Panc1 (cell line): ENCODE measurements at regions of chr16 and their contacts with region 1.

Region 1: DNA sequence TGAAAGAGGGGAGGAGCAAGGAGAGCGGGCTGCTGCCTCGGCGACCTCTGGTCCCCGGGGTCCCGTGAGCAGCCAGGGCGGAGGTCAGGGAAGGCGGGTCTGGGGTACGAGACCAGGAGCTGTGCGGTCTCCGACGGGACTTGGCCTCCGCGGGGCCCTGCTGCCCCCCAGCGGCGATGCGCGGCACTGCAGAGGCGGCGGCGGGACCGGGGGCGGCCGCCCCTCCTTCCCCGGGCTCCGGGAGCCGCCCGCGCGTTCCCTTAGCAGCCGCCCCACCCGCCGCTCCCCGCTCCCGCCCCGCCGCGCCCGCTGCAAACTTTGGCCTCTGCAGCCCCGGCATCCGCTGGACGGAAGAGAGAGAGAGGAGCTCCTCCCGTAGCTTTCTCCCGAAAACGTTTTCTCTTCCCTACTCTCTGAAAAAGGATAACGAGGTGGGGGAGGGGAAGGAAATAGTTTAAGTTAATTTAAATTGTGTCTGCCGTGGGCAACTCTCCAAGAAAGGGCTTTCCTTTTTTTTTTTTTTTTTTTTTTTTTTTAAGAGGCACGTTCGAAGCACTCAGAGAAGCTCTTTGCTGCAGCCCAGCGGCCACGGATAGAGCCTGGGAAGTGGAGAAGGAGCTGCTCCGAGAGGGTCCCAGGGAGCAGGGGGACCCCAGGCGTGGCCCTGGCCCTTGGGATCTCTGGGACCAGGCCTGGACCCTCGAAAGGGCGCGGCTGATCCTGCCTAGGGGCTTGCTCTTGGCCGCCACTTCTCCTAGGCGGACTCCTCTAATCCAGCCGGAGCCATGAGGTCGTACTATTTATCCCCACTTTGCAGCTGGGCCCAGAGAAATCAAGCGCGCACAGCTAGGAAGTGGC is 43.2 kb downstream of the C16orf82 start:
- DNase-seq: no peak
- ATAC-seq: peak; percentile 84
- H3K4me3 ChIP-seq: peak overlapping the region; percentile 31 to 47
- H3K27ac ChIP-seq: no peak overlapping the region
- H3K4me1 ChIP-seq: peaks cover 6% of the 10 kb centered on the region; the same call in 1 of the 2 replicates
- H3K27me3 ChIP-seq: peaks cover 2% of the 10 kb centered on the region; the same call in 1 of the 2 replicates
- CTCF ChIP-seq: peak; percentile 97

Region 2: DNA sequence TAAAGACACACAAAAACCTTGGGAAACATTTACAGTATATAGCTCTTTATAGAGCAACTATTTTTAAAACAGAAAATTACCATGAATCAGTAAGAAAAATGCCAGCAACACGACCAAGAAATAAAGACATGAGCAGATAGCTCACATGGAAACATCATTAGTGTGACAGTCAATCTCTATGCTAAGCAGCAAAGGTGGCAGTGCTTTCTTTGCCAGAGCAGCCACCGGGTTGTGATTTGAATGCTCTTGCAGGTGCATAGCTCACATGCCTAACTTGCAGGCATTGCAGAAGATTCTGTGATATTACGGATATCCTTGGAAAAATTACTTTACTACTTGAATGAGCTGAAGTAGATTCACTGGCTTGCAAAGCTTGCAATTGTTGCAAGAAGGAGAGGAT is 696.1 kb before region 1 on chr16:
- CTCF ChIA-PET with region 1: interaction called, 16 read pairs
- POLR2A ChIA-PET with region 1: no interaction called
- in situ Hi-C with region 1: no loop called
- intact Hi-C with region 1: no loop called
- DNase-seq: no peak
- ATAC-seq: no peak
- H3K4me3 ChIP-seq: no peak overlapping the region
- H3K27ac ChIP-seq: no peak overlapping the region
- H3K4me1 ChIP-seq: no peaks in the 10 kb centered on the region
- H3K27me3 ChIP-seq: no peaks in the 10 kb centered on the region
- CTCF ChIP-seq: no peak

Region 3: GRCh38 chr16:26727848-26728247 is 382.0 kb before region 1 on chr16:
- CTCF ChIA-PET with region 1: interaction called, 13 read pairs
- POLR2A ChIA-PET with region 1: no interaction called
- in situ Hi-C with region 1: no loop called
- intact Hi-C with region 1: no loop called
- DNase-seq: no peak
- ATAC-seq: no peak
- H3K4me3 ChIP-seq: no peak overlapping the region
- H3K27ac ChIP-seq: no peak overlapping the region
- H3K4me1 ChIP-seq: no peaks in the 10 kb centered on the region
- H3K27me3 ChIP-seq: no peaks in the 10 kb centered on the region; the same call in 1 of the 2 replicates
- CTCF ChIP-seq: no peak

Region 4: GRCh38 chr16:26877421-26877820 is 232.5 kb before region 1 on chr16:
- CTCF ChIA-PET with region 1: no interaction called
- POLR2A ChIA-PET with region 1: no interaction called
- in situ Hi-C with region 1: no loop called
- intact Hi-C with region 1: no loop called
- DNase-seq: no peak
- ATAC-seq: no peak
- H3K4me3 ChIP-seq: no peak overlapping the region
- H3K27ac ChIP-seq: no peak overlapping the region
- H3K4me1 ChIP-seq: no peaks in the 10 kb centered on the region
- H3K27me3 ChIP-seq: no peaks in the 10 kb centered on the region
- CTCF ChIP-seq: no peak

Region 5: DNA sequence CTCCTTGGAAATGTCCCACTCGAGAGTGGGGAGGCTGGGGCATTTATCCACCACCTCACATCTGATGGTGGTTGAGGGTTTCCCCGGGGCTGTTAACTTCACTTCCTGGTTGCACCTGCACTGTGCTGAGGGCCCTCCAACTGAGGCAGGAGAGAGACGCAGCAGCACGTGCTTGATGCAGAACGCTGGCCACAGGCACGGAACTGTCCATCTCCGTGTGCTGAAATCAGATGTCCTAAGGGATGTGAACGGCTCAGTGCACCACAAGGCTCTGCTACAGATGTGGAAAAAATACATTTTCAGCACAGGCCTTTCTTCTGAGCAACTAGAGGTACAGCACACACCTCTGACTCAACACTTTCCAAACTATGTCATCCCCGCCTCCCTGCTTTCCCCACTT is 157.9 kb before region 1 on chr16:
- CTCF ChIA-PET with region 1: interaction called, 10 read pairs
- POLR2A ChIA-PET with region 1: interaction called, 4 read pairs
- in situ Hi-C with region 1: no loop called
- intact Hi-C with region 1: no loop called
- DNase-seq: no peak
- ATAC-seq: no peak
- H3K4me3 ChIP-seq: no peak overlapping the region
- H3K27ac ChIP-seq: no peak overlapping the region
- H3K4me1 ChIP-seq: no peaks in the 10 kb centered on the region
- H3K27me3 ChIP-seq: no peaks in the 10 kb centered on the region; the same call in 1 of the 2 replicates
- CTCF ChIP-seq: no peak

Region 6: DNA sequence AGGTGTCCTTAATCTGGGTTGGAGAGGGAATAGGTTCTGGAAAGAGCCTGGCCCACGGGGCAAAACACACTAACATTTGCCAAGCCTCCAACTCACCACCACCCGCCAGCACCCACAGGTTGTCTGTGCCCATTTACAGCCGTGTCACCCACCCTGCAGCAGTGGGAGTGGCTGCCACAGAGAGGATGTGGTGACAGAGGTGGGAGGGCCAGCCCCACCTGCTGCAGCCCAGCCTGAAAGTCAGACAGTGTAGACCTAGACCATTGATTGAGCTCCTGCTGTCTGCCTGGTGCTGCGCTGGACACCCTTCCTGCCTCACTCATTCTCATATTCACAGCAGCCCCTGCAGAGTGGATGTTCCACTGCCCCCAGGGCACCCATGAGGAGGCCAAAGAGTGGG is 336.8 kb after region 1 on chr16:
- CTCF ChIA-PET with region 1: no interaction called
- POLR2A ChIA-PET with region 1: no interaction called
- in situ Hi-C with region 1: no loop called
- intact Hi-C with region 1: no loop called
- DNase-seq: no peak
- ATAC-seq: peak; percentile 39; the same call in 1 of the 2 replicates
- H3K4me3 ChIP-seq: no peak overlapping the region
- H3K27ac ChIP-seq: no peak overlapping the region
- H3K4me1 ChIP-seq: no peaks in the 10 kb centered on the region
- H3K27me3 ChIP-seq: peaks cover 2% of the 10 kb centered on the region; the same call in 1 of the 2 replicates
- CTCF ChIP-seq: no peak